Vagina (tissue), 2 donors: ENCODE measurements at regions of chr3 and their contacts with region 1.

Region 1: DNA sequence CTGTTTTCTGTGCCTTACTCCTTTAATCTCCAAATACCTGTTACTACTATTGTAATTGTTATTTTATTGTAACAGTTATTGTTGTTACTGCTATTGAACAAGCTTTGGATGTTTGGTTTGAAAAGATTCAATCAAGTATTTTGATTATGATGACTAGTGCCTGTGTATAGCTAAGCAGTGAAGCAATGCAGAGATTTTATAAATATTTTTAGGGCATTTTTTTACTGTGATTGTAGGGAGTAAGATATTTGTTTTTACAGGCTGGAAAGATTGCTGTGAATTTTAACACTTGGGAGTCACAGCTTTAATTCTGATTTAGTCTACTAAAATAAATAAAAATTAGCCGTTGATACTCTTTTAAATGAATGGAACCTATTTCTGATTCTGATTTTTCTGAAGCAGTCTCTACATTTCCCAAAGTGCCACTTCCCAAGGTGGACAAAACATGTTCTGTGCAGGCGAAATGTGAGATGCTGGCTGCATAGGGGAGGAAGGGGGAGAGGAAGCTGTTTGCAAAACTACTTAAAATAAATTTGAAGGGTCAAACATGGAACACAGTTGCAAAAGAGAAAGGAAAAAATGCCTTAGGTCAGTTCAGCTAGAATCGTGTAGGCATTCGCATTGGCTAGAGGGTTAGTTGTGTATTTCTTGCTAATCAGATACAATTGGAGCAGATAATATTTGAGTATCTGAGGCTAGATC is 25.7 kb downstream of the EEFSEC start:
- DNase-seq: no peak
- H3K4me3 ChIP-seq: peak overlapping the region; percentile 1 to 24
- H3K27ac ChIP-seq: peak overlapping the region; percentile 51
- H3K4me1 ChIP-seq: peaks cover 16% of the 10 kb centered on the region
- H3K27me3 ChIP-seq: no peaks in the 10 kb centered on the region
- CTCF ChIP-seq: no peak
- POLR2A ChIP-seq: no peak

Region 2: GRCh38 chr3:128487813-128488635 is 309.1 kb after region 1 on chr3:
- intact Hi-C with region 1: loop called (anchors 2 kb)
- DNase-seq: no peak
- H3K4me3 ChIP-seq: peak overlapping the region; percentile 83
- H3K27ac ChIP-seq: peak overlapping the region; percentile 95
- H3K4me1 ChIP-seq: peaks cover 91% of the 10 kb centered on the region
- H3K27me3 ChIP-seq: no peaks in the 10 kb centered on the region
- CTCF ChIP-seq: no peak
- POLR2A ChIP-seq: peak in 1 of 2 donors; percentile 95